ENCODE measurements at regions of chr2 and their contacts with region 1.

Region 1: GRCh38 chr2:219104107-219105035 is 43.6 kb upstream of the IHH start:
- DNase-seq: peak; percentile 18
- H3K4me3 Mint-ChIP-seq: no peak overlapping the region
- H3K27ac Mint-ChIP-seq: peak overlapping the region; percentile 53
- H3K4me1 Mint-ChIP-seq: peaks cover 29% of the 10 kb centered on the region
- H3K27me3 Mint-ChIP-seq: no peaks in the 10 kb centered on the region

Region 2: GRCh38 chr2:219073413-219074129 is 30.8 kb before region 1 on chr2:
- CTCF ChIA-PET with region 1: interaction called, 12 read pairs
- POLR2A ChIA-PET with region 1: no interaction called
- intact Hi-C with region 1: no loop called
- DNase-seq: peak; percentile 25
- H3K4me3 Mint-ChIP-seq: no peak overlapping the region
- H3K27ac Mint-ChIP-seq: no peak overlapping the region
- H3K4me1 Mint-ChIP-seq: no peaks in the 10 kb centered on the region
- H3K27me3 Mint-ChIP-seq: no peaks in the 10 kb centered on the region

Region 3: GRCh38 chr2:219084791-219085190 is 19.6 kb before region 1 on chr2:
- CTCF ChIA-PET with region 1: interaction called, 12 read pairs
- POLR2A ChIA-PET with region 1: no interaction called
- intact Hi-C with region 1: loop called (anchors 2 kb)
- DNase-seq: no peak
- H3K4me3 Mint-ChIP-seq: no peak overlapping the region
- H3K27ac Mint-ChIP-seq: no peak overlapping the region
- H3K4me1 Mint-ChIP-seq: peaks cover 4% of the 10 kb centered on the region
- H3K27me3 Mint-ChIP-seq: no peaks in the 10 kb centered on the region

Region 4: GRCh38 chr2:219090436-219091299 is 13.7 kb before region 1 on chr2:
- CTCF ChIA-PET with region 1: interaction called, 13 read pairs
- POLR2A ChIA-PET with region 1: no interaction called
- intact Hi-C with region 1: loop called (anchors 2 kb)
- DNase-seq: no peak
- H3K4me3 Mint-ChIP-seq: no peak overlapping the region
- H3K27ac Mint-ChIP-seq: no peak overlapping the region
- H3K4me1 Mint-ChIP-seq: peaks cover 4% of the 10 kb centered on the region
- H3K27me3 Mint-ChIP-seq: no peaks in the 10 kb centered on the region

Region 5: DNA sequence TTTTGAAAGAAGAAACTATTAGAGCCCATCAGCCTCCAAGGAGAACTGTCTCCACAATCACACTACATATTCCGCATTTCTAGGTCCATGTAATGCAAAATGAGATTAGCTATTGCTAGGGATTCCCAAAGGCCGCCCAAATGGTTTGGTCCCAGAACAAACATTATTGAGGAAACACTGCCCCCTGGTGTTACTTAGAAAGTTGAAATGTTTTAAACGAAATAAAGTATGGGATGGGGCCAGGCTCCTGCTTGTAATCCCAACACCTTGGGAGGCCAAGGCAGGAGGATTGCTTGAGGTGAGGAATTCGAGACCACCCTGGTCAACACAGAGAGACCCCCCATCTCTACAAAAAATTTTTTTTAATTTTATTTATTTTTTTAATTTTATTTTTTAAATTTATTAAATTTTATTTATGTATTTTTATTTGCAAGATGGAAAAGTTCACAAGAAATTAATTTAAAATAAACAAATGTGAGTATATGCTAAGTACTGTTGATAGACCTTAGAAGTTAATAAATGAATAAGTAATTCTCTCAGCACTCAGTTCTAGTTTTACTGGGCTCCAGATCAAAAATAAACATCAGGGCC is 50.8 kb after region 1 on chr2:
- CTCF ChIA-PET with region 1: interaction called, 12 read pairs
- POLR2A ChIA-PET with region 1: no interaction called
- intact Hi-C with region 1: no loop called
- DNase-seq: peak; percentile 31
- H3K4me3 Mint-ChIP-seq: no peak overlapping the region
- H3K27ac Mint-ChIP-seq: no peak overlapping the region
- H3K4me1 Mint-ChIP-seq: peaks cover 8% of the 10 kb centered on the region
- H3K27me3 Mint-ChIP-seq: no peaks in the 10 kb centered on the region